Activated CD8-positive, alpha-beta T cell treated with anti-CD3 and anti-CD28 coated beads for 36 hours (primary cell): ENCODE measurements at regions of chr16 and their contacts with region 1.

Region 1: GRCh38 chr16:69310653-69311532 is at the start of gene VPS4A:
- DNase-seq: peak; percentile 98
- ATAC-seq: peak; percentile 98
- H3K4me3 Mint-ChIP-seq: peak within 1 kb of the TSS; percentile 89
- H3K27ac Mint-ChIP-seq: peak within 1 kb of the TSS; percentile 94
- H3K4me1 Mint-ChIP-seq: peaks cover 27% of the 10 kb centered on the region
- H3K27me3 Mint-ChIP-seq: no peaks in the 10 kb centered on the region
- CTCF ChIP-seq: peak; percentile 83
- total RNA-seq, gene VPS4A: 30.5 to 31.2 TPM

Region 2: DNA sequence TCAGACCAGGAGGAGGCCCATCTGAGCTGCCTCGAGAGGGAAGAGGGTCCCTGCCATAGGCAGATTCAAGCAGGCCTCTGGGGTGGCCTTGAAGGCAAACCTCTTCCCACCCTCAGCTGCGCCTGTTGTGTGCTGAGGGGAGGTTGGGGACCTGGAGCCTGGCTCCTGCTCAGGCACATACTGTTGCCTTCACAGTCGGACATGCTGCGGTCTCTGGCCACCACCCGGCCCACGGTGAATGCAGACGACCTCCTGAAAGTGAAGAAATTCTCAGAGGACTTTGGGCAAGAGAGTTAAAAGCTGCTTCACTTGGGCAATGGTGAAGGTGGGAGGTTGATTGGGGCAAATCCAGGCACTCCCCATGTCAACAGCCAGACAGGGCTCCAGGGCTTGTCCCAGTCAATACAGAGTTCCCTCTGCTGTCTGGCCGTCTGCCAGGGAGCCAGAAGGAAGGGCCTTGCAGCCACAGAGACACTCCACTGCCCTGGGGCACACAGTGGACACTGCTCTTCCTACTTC is 13.2 kb after region 1 on chr16:
- CTCF ChIA-PET with region 1: interaction called, 3 read pairs
- POLR2A ChIA-PET with region 1: interaction called, 93 read pairs
- intact Hi-C with region 1: no loop called
- DNase-seq: no peak
- ATAC-seq: no peak
- H3K4me3 Mint-ChIP-seq: no peak overlapping the region
- H3K27ac Mint-ChIP-seq: no peak overlapping the region
- H3K4me1 Mint-ChIP-seq: peaks cover 38% of the 10 kb centered on the region
- H3K27me3 Mint-ChIP-seq: no peaks in the 10 kb centered on the region
- CTCF ChIP-seq: no peak

Region 3: DNA sequence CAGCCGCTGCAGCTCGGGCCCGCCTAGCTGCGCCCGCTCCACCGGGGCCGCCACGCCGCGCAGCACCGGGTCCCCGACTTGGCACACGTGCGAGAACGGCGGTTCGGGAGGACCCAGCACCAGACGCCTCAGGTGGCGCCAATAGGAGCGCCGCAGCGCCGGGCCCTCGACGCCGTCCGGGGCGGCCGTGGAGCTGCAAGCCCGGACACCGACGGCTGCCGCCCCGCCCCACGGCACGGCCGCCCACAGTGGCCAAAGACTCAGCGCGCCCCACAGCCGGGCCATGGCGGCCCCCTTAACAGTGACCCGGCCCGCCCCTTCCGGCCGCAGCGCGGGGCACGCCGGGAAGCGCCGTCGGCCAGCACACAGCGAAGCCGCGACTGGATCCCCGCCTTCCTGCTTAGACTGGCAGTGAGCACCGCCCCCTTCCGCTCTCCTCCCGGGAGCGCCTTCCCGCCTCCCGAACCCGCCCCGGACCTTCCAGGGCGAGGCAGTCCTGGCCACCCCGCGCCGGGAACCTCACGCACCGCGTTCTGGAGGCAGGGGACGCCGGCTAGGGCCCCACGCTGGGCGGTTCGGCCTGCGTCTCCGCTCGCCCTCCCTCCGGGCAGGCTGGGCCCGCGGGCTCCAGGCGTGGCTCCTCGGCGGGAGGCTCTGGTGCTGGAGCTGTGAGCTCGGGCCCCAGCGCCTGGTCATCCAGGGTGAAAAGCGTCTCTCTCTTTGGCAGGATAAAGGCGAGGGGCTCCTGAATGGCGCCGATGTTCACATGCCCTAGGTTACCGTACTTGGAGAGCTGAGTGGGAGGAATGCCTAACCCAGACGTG is 19.6 kb after region 1 on chr16 and contains the start of gene PDF:
- CTCF ChIA-PET with region 1: interaction called, 3 read pairs
- POLR2A ChIA-PET with region 1: interaction called, 93 read pairs
- intact Hi-C with region 1: no loop called
- DNase-seq: peak; percentile 85
- ATAC-seq: peak; percentile 97
- H3K4me3 Mint-ChIP-seq: peak within 1 kb of the TSS; percentile 84
- H3K27ac Mint-ChIP-seq: peak within 1 kb of the TSS; percentile 87
- H3K4me1 Mint-ChIP-seq: peaks cover 40% of the 10 kb centered on the region
- H3K27me3 Mint-ChIP-seq: no peaks in the 10 kb centered on the region
- CTCF ChIP-seq: no peak
- total RNA-seq, gene PDF: 16.1 to 19.5 TPM

Region 4: GRCh38 chr16:69386596-69386995 is 75.7 kb after region 1 on chr16:
- CTCF ChIA-PET with region 1: no interaction called
- POLR2A ChIA-PET with region 1: no interaction called
- intact Hi-C with region 1: no loop called
- DNase-seq: no peak
- ATAC-seq: no peak
- H3K4me3 Mint-ChIP-seq: peak overlapping the region; percentile 86
- H3K27ac Mint-ChIP-seq: peak overlapping the region; percentile 42
- H3K4me1 Mint-ChIP-seq: peaks cover 25% of the 10 kb centered on the region
- H3K27me3 Mint-ChIP-seq: no peaks in the 10 kb centered on the region
- CTCF ChIP-seq: no peak